Motor neuron (in vitro differentiated cells): ENCODE measurements at regions of chr9 and their contacts with region 1.

Region 1: GRCh38 chr9:3708751-3709150 is 182.9 kb upstream of the RFX3 start:
- ATAC-seq: peak in 3 of 8 experiments; percentile 53 to 92 (median 57)
- H3K4me3 ChIP-seq: no peak overlapping the region
- H3K27ac ChIP-seq: no peak overlapping the region
- H3K4me1 ChIP-seq: no peaks in the 10 kb centered on the region

Region 2: GRCh38 chr9:3467593-3468219 is 241.0 kb before region 1 on chr9:
- in situ Hi-C with region 1: loop called in 1 of 9 experiments (anchors 25 kb)
- ATAC-seq: peak; percentile 61 to 100 (median 94)
- H3K4me3 ChIP-seq: no peak overlapping the region
- H3K27ac ChIP-seq: no peak overlapping the region
- H3K4me1 ChIP-seq: peaks cover 4 to 8% of the 10 kb centered on the region in 2 donors